A673 (cell line): ENCODE measurements at regions of chr14 and their contacts with region 1.

Region 1: DNA sequence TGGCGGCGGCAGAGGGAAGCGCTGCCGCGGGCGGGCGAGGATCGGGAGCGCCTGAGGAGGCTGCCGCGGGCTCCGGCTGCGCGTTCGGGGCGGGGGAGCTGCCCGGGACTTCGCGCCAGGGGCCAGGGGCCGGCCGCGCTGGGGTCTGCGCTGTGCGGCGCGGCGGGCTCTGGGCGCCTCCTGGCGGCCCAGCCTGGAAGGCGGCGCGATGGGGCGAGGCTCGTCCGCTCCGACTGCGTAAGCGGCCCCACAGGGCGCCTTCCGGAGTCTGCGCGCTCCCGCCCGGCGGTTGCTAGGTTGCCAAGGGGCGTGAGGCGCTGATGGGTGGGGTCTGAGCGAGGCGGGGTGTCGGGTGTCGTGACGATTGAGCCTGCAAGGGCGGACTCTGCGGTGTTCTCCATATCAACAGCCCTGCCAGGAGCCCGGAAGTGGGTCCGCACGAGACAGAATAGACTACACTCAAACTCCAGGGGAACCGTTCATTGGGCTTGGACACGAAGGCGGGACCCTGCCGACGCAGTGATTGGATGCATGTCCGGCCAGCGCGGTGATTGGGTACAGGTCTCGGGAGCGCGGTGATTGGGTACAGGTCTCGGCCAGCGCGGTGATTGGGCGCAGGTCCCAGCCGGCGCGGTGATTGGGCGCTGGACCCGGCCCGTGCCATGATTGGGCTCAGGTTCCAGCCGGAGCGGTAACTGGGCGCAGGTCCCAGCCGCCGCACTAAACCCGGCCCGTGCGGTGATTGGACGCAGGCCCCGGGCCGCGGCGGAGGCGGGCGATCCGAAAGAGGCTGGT is at the start of gene TEDC1:
- DNase-seq: peak; percentile 100
- H3K4me3 ChIP-seq: peak within 1 kb of the TSS; percentile 83
- H3K27ac ChIP-seq: peak within 1 kb of the TSS; percentile 93
- H3K4me1 ChIP-seq: peaks cover 22% of the 10 kb centered on the region
- H3K27me3 ChIP-seq: no peaks in the 10 kb centered on the region
- CTCF ChIP-seq: peak; percentile 66
- total RNA-seq, gene TEDC1: 34.0 and 48.0 TPM in 2 replicates

Region 2: DNA sequence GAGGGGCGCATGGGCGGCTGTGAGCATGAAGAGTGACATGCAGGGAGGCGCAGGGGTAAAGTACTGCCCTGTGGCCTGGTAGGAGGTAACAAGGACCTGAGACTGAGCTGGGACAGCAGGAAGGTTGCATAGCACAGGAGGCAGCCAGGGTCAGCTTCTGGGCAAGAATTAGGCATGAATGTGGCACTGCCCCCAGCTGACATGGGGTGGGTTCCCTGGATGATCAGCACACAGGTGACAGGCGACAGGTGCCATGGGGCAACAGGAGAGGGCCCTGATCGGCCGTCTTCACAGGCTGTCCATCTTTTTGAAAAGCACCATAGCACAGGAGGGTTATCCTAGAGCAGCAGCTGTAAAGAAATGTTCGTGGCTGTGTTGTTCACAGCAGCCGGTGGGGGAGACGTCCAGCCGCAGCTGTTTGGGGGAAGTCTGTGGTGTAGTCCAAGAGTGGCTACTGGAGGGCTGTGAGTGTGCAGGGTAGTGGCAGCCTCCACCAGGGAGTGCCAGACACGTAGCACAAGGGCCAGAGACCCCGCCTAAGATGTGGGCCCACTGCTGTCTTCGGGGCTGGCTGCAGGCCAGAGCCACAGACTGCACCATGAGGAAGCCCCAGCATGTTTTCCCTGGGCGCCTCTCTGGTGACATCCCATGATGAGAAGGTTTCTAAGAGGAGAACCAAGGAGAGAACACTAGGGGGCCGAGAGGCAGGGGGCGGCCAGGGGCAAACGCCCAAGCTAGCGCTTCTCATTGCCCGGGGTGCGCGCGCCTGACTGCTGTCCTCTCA is 496.8 kb before region 1 on chr14:
- CTCF ChIA-PET with region 1: no interaction called
- POLR2A ChIA-PET with region 1: no interaction called
- intact Hi-C with region 1: no loop called
- DNase-seq: no peak
- H3K4me3 ChIP-seq: no peak overlapping the region
- H3K27ac ChIP-seq: no peak overlapping the region
- H3K4me1 ChIP-seq: no peaks in the 10 kb centered on the region
- H3K27me3 ChIP-seq: no peaks in the 10 kb centered on the region
- CTCF ChIP-seq: no peak

Region 3: GRCh38 chr14:105369653-105370040 is 121.1 kb before region 1 on chr14:
- CTCF ChIA-PET with region 1: interaction called, 34 read pairs
- POLR2A ChIA-PET with region 1: no interaction called
- intact Hi-C with region 1: loop called (anchors 1 kb)
- DNase-seq: no peak
- H3K4me3 ChIP-seq: no peak overlapping the region
- H3K27ac ChIP-seq: no peak overlapping the region
- H3K4me1 ChIP-seq: peaks cover 8% of the 10 kb centered on the region
- H3K27me3 ChIP-seq: no peaks in the 10 kb centered on the region
- CTCF ChIP-seq: no peak

Region 4: DNA sequence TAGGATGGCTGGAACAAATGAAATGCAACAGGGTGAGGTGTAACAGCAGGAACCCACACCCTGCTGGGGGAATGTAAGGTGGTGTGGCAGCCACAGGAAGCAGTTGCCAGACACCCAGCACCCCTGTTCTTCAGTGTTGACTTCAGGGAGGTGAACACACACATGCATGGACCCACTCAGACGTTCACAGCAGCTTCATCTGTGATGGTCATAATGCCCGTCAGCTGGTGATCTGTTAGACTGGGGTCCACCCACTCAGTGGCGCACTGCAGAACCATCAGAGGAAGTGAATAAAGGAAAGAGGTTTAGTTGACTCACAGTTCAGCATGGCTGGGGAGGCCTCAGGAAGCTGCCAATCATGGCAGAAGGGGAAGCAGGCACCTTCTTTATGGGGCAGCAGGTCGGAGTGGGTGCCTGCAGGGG is 115.1 kb before region 1 on chr14:
- CTCF ChIA-PET with region 1: interaction called, 34 read pairs
- POLR2A ChIA-PET with region 1: no interaction called
- intact Hi-C with region 1: loop called (anchors 1 kb)
- DNase-seq: no peak
- H3K4me3 ChIP-seq: no peak overlapping the region
- H3K27ac ChIP-seq: no peak overlapping the region
- H3K4me1 ChIP-seq: no peaks in the 10 kb centered on the region
- H3K27me3 ChIP-seq: no peaks in the 10 kb centered on the region
- CTCF ChIP-seq: no peak

Region 5: DNA sequence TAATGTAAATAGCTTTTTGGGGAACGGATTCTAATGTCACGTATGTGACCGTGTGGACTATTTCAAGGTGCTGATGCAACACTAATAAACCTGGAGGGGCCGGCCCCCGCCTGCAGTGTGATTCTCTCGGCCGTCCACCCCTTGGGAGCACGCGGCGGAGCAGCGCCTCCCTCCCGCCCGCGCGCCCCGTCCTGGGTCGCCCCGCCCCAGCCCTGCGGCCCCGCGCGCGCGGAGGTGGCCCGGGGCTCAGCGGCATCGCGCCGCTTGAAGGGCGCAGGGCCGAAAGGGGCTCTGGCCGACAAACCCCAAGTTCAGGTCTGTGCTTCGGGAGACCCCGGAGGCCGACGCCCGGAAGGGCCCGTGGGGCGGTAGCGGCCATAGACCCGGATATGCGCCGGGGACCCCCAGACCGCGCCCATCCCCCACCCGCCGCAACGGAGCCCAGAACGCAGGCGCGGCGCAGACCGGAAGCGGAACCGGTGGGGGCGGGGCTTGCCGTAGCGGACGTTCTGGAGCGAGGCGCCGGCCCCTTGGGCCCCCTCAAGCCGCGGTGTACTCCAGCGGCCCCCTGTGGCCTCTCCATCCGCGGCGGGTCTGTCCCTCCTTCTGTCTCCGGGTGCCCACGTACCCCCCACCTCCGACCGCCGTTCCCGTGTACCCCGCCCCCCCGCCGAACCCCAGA is 92.6 kb before region 1 on chr14 and contains the start of gene TEX22:
- CTCF ChIA-PET with region 1: no interaction called
- POLR2A ChIA-PET with region 1: interaction called, 16 read pairs
- intact Hi-C with region 1: no loop called
- DNase-seq: peak; percentile 89
- H3K4me3 ChIP-seq: peak within 1 kb of the TSS; percentile 67
- H3K27ac ChIP-seq: peak within 1 kb of the TSS; percentile 91
- H3K4me1 ChIP-seq: peaks cover 5% of the 10 kb centered on the region
- H3K27me3 ChIP-seq: no peaks in the 10 kb centered on the region
- CTCF ChIP-seq: 0 out of 2 replicates have a peak, but pooled peaks have one; percentile 12
- total RNA-seq, gene TEX22: 2.1 and 2.7 TPM in 2 replicates

Region 6: GRCh38 chr14:105448706-105449111 is 42.1 kb before region 1 on chr14:
- CTCF ChIA-PET with region 1: no interaction called
- POLR2A ChIA-PET with region 1: no interaction called
- intact Hi-C with region 1: loop called (anchors 2 kb)
- DNase-seq: peak; percentile 79
- H3K4me3 ChIP-seq: no peak overlapping the region
- H3K27ac ChIP-seq: no peak overlapping the region
- H3K4me1 ChIP-seq: peaks cover 4% of the 10 kb centered on the region
- H3K27me3 ChIP-seq: no peaks in the 10 kb centered on the region
- CTCF ChIP-seq: peak; percentile 89

Region 7: GRCh38 chr14:105470804-105471610 is 19.8 kb before region 1 on chr14:
- CTCF ChIA-PET with region 1: interaction called, 17 read pairs
- POLR2A ChIA-PET with region 1: no interaction called
- intact Hi-C with region 1: no loop called
- DNase-seq: peak; percentile 59
- H3K4me3 ChIP-seq: no peak overlapping the region
- H3K27ac ChIP-seq: peak overlapping the region; percentile 77
- H3K4me1 ChIP-seq: peaks cover 46% of the 10 kb centered on the region
- H3K27me3 ChIP-seq: no peaks in the 10 kb centered on the region
- CTCF ChIP-seq: peak; percentile 27; the same call in 1 of the 2 replicates

Region 8: GRCh38 chr14:105527661-105528581 is 37.2 kb after region 1 on chr14:
- CTCF ChIA-PET with region 1: interaction called, 3 read pairs
- POLR2A ChIA-PET with region 1: no interaction called
- intact Hi-C with region 1: loop called (anchors 2 kb)
- DNase-seq: peak; percentile 85
- H3K4me3 ChIP-seq: peak overlapping the region; percentile 55
- H3K27ac ChIP-seq: peak overlapping the region; percentile 58
- H3K4me1 ChIP-seq: peaks cover 15% of the 10 kb centered on the region
- H3K27me3 ChIP-seq: no peaks in the 10 kb centered on the region
- CTCF ChIP-seq: peak; percentile 73